Calu3 (cell line): ENCODE measurements at regions of chr5 and their contacts with region 1.

Region 1: DNA sequence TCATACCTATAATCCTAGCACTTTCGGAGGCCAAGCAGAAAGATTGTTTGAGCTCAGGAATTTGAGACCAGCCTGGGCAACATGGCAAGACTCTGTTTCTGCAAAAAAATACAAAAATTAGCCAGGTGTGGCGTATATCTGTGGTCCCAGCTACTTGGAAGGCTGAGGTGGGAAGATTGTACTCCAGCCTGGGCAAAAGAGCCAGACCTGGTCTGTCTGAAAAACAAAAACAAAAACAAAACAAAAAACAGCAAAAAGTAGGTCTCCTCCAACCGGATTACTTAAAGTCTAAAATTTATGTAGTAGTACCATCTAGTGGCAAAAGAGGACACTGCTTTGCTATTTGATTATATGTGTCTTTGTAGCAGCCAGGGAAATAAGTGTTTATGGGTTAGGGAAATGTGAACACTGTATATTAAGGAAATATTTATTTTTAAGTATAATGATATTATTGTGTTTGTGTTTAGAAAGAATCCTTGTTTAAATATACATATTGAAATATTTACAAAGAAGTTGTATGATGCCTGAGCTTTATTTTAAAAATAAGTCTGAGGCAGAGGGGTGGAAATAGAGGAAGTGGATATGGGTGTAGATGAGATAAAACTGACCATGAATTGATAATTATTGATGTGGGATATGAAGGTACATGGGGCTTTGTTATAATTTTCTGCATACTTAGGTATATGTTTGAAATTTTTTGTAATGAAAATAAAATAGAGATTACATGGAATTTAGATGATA is 20.0 kb downstream of the APC start:
- DNase-seq: peak; percentile 11
- H3K4me3 Mint-ChIP-seq: no peak overlapping the region
- H3K27ac Mint-ChIP-seq: no peak overlapping the region
- H3K4me1 Mint-ChIP-seq: peaks cover 7% of the 10 kb centered on the region
- H3K27me3 Mint-ChIP-seq: no peaks in the 10 kb centered on the region
- CTCF ChIP-seq: peak; percentile 61

Region 2: GRCh38 chr5:112174959-112175594 is 582.6 kb before region 1 on chr5:
- CTCF ChIA-PET with region 1: no interaction called
- intact Hi-C with region 1: loop called (anchors 5 kb)
- DNase-seq: peak; percentile 57
- H3K4me3 Mint-ChIP-seq: no peak overlapping the region
- H3K27ac Mint-ChIP-seq: no peak overlapping the region
- H3K4me1 Mint-ChIP-seq: no peaks in the 10 kb centered on the region
- H3K27me3 Mint-ChIP-seq: no peaks in the 10 kb centered on the region
- CTCF ChIP-seq: peak; percentile 67

Region 3: DNA sequence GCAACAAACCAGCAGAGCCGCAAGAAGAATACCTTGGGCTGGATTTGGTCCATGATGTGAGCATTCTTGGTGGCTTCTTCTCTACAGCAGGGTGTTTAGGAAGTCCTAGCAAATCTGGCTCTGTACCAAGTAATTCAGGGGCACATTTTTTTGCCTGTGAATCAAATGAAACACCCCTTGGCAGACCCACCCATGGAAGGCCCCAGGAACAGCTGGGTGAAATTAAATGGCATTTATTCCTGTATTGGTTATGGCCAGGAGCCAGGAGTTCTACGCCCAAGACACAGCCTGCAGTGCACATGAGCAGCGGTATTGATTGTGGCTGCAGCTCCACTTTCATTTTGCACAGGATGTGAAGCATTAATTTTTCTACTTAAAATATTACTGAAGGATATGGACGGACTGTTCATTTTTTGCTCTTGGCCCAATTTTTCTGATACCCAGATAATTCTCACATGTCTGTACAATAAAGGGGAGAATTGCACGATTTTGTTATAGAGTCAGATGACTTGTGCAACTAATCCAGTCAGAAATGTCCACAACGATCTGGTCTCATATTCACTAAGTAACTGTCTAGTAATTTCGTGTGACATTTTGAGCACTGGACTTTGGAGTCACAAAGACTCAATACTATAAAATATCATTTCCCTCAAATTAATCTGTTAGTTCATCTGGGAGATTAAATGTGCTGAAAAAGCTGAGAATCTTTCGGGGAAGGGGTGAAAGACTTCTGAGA is 140.7 kb before region 1 on chr5:
- CTCF ChIA-PET with region 1: no interaction called
- intact Hi-C with region 1: loop called (anchors 5 kb)
- DNase-seq: peak; percentile 59
- H3K4me3 Mint-ChIP-seq: peak overlapping the region; percentile 66
- H3K27ac Mint-ChIP-seq: no peak overlapping the region
- H3K4me1 Mint-ChIP-seq: peaks cover 13% of the 10 kb centered on the region
- H3K27me3 Mint-ChIP-seq: no peaks in the 10 kb centered on the region
- CTCF ChIP-seq: no peak

Region 4: GRCh38 chr5:113172231-113172826 is 414.7 kb after region 1 on chr5:
- CTCF ChIA-PET with region 1: no interaction called
- intact Hi-C with region 1: no loop called
- DNase-seq: no peak
- H3K4me3 Mint-ChIP-seq: no peak overlapping the region
- H3K27ac Mint-ChIP-seq: no peak overlapping the region
- H3K4me1 Mint-ChIP-seq: no peaks in the 10 kb centered on the region
- H3K27me3 Mint-ChIP-seq: peaks cover 45% of the 10 kb centered on the region
- CTCF ChIP-seq: no peak